Activated naive CD4-positive, alpha-beta T cell treated with anti-CD3 and anti-CD28 coated beads for 36 hours (primary cell): ENCODE measurements at regions of chr12 and their contacts with region 1.

Region 1: GRCh38 chr12:91382081-91382543 is 199.5 kb upstream of the DCN start:
- DNase-seq: peak; percentile 92
- H3K4me3 Mint-ChIP-seq: peak overlapping the region; percentile 76
- H3K27ac Mint-ChIP-seq: no peak overlapping the region
- H3K4me1 Mint-ChIP-seq: peaks cover 5% of the 10 kb centered on the region
- H3K27me3 Mint-ChIP-seq: no peaks in the 10 kb centered on the region

Region 2: GRCh38 chr12:91396293-91396692 is 14.2 kb after region 1 on chr12:
- CTCF ChIA-PET with region 1: interaction called, 11 read pairs
- intact Hi-C with region 1: no loop called
- DNase-seq: no peak
- H3K4me3 Mint-ChIP-seq: no peak overlapping the region
- H3K27ac Mint-ChIP-seq: no peak overlapping the region
- H3K4me1 Mint-ChIP-seq: no peaks in the 10 kb centered on the region
- H3K27me3 Mint-ChIP-seq: no peaks in the 10 kb centered on the region

Region 3: GRCh38 chr12:91478500-91478899 is 96.4 kb after region 1 on chr12:
- CTCF ChIA-PET with region 1: no interaction called
- intact Hi-C with region 1: no loop called
- DNase-seq: no peak
- H3K4me3 Mint-ChIP-seq: no peak overlapping the region
- H3K27ac Mint-ChIP-seq: no peak overlapping the region
- H3K4me1 Mint-ChIP-seq: no peaks in the 10 kb centered on the region
- H3K27me3 Mint-ChIP-seq: no peaks in the 10 kb centered on the region

Region 4: GRCh38 chr12:91577586-91578539 is 195.8 kb after region 1 on chr12:
- CTCF ChIA-PET with region 1: interaction called, 17 read pairs
- intact Hi-C with region 1: loop called (anchors 5 kb)
- DNase-seq: no peak
- H3K4me3 Mint-ChIP-seq: peak overlapping the region; percentile 71
- H3K27ac Mint-ChIP-seq: peak overlapping the region; percentile 61
- H3K4me1 Mint-ChIP-seq: peaks cover 19% of the 10 kb centered on the region
- H3K27me3 Mint-ChIP-seq: no peaks in the 10 kb centered on the region

Region 5: DNA sequence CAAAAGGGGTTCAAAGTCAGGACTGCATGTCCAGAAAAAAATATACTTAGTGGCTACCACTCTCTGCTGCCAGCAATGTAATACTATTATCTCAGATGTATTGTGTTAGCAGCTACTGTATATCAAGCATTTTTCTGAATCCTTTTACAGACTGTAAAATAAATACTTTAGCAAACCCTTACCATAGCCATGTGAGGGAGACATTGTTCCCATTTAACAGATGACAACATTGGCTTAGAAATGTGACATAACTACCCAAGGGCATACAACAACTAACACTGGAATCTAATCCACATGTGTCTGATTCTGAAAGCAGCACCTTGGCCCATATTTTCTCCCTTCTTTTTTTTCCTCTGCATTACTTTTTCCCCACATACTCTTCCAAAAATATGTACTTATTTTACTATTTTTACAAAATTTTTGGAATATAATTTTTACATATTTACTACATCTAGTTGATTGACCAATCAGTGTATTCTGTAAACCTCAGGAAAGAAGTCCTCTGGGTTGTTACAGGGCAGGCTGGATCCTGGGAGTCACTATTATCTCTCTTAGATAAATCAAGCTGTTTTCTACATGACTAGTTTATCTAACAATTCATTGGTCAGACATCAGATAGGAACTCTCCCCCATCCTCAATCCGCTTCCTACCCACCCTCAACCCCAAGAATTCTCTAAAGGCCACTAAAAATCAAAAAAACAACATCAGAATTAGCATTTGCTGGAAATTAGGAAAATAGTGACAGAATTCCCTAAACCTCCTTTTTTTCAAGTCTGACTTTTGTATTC is 609.5 kb after region 1 on chr12:
- CTCF ChIA-PET with region 1: interaction called, 4 read pairs
- intact Hi-C with region 1: loop called (anchors 5 kb)
- DNase-seq: no peak
- H3K4me3 Mint-ChIP-seq: no peak overlapping the region
- H3K27ac Mint-ChIP-seq: no peak overlapping the region
- H3K4me1 Mint-ChIP-seq: peaks cover 61% of the 10 kb centered on the region
- H3K27me3 Mint-ChIP-seq: no peaks in the 10 kb centered on the region

Region 6: GRCh38 chr12:92136965-92137721 is 755.0 kb after region 1 on chr12:
- CTCF ChIA-PET with region 1: no interaction called
- intact Hi-C with region 1: loop called (anchors 2 kb)
- DNase-seq: no peak
- H3K4me3 Mint-ChIP-seq: peak overlapping the region; percentile 100
- H3K27ac Mint-ChIP-seq: peak overlapping the region; percentile 99
- H3K4me1 Mint-ChIP-seq: peaks cover 58% of the 10 kb centered on the region
- H3K27me3 Mint-ChIP-seq: no peaks in the 10 kb centered on the region

Region 7: DNA sequence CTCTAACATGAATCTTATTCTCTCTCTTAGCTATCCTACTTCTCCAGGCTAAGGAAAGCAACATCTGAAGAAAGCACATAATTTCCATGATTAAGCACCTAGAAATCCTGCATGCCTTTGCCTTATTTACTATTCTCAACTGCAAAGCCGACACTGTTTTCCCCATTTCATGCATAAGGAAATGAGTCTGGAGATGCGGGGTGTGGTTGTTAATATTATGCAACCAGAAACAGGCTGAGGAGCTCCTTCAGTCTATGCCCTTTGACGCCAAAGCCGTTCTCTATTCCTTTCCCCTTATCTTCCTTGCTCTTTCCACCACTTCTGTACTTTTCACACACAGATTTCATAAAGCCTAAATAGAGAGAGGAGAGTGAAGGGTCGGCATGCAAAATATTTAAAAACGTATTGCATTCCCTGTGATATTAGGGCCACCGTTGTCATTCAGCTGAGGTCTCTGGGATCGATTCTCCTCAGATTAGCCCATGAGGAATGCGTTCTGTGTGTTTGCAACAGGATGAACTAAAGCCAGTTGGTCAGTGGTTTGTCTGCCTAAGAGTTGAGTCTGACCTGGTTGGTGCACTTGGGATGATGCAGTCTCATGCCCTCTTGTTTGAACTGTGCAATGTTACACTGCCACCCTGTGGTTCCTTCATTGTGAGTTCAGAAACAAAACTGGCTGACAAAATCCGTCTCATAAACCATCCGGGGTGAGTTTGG is 1267.6 kb after region 1 on chr12:
- CTCF ChIA-PET with region 1: interaction called, 10 read pairs
- intact Hi-C with region 1: loop called (anchors 1 kb)
- DNase-seq: peak; percentile 75
- H3K4me3 Mint-ChIP-seq: no peak overlapping the region
- H3K27ac Mint-ChIP-seq: no peak overlapping the region
- H3K4me1 Mint-ChIP-seq: peaks cover 7% of the 10 kb centered on the region
- H3K27me3 Mint-ChIP-seq: peaks cover 2% of the 10 kb centered on the region

Region 8: DNA sequence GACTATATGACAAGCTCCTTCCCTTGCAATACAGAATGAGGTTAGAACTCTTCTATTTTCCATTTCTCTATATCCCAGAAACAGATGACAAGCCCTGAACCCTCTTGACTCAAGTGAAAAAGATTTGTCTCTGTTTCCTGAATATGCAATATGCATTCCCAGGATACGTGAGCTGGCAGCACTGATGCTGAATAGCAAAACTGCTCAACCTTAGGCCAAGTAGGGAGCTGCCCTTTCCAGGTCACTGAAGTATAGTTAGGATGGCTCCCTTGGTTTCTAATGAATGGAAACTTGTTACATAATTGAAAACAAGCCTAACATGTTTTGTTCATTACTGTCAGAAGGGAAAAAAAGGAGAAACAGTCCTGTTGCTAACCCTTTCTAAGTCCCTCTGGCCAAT is 1272.8 kb after region 1 on chr12:
- CTCF ChIA-PET with region 1: interaction called, 10 read pairs
- intact Hi-C with region 1: loop called (anchors 1 kb)
- DNase-seq: no peak
- H3K4me3 Mint-ChIP-seq: no peak overlapping the region
- H3K27ac Mint-ChIP-seq: no peak overlapping the region
- H3K4me1 Mint-ChIP-seq: peaks cover 3% of the 10 kb centered on the region
- H3K27me3 Mint-ChIP-seq: peaks cover 2% of the 10 kb centered on the region